ENCODE measurements at regions of chr7 and their contacts with region 1.

Region 1: GRCh38 chr7:143416565-143417149 is 8.0 kb upstream of the EPHA1 start:
- DNase-seq: peak; percentile 80
- H3K4me3 Mint-ChIP-seq: no peak overlapping the region
- H3K27ac Mint-ChIP-seq: no peak overlapping the region
- H3K4me1 Mint-ChIP-seq: peaks cover 2% of the 10 kb centered on the region
- H3K27me3 Mint-ChIP-seq: peaks cover 16% of the 10 kb centered on the region

Region 2: DNA sequence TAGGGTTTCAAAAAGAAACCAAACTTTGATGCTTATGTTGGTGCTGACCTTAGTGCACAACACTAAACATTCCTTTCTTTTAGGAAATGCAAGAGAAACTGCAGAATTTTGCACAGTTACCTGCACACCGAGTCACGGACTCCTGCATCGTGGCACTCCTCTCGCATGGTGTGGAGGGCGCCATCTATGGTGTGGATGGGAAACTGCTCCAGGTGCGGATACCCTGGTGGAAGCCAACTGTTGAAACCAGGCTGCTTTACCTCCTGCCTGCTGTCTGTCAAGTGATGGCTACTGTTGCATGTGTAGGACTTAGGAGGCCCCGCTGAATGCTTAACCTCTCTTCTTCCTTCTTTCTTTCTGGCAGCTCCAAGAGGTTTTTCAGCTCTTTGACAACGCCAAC is 116.8 kb before region 1 on chr7:
- intact Hi-C with region 1: loop called (anchors 5 kb)
- DNase-seq: peak; percentile 90
- H3K4me3 Mint-ChIP-seq: no peak overlapping the region
- H3K27ac Mint-ChIP-seq: no peak overlapping the region
- H3K4me1 Mint-ChIP-seq: peaks cover 65% of the 10 kb centered on the region
- H3K27me3 Mint-ChIP-seq: no peaks in the 10 kb centered on the region